ENCODE measurements at regions of chr12 and their contacts with region 1.

Region 1: GRCh38 chr12:6195665-6196535 is 4.3 kb upstream of the CD9 start:
- DNase-seq: peak; percentile 73
- H3K4me3 ChIP-seq: no peak overlapping the region
- H3K27ac ChIP-seq: no peak overlapping the region
- H3K4me1 ChIP-seq: peaks cover 14% of the 10 kb centered on the region
- CTCF ChIP-seq: peak; percentile 87

Region 2: GRCh38 chr12:6278439-6279255 is 82.7 kb after region 1 on chr12:
- CTCF ChIA-PET with region 1: interaction called, 6 read pairs
- POLR2A ChIA-PET with region 1: interaction called, 6 read pairs
- intact Hi-C with region 1: loop called (anchors 1 kb)
- DNase-seq: peak; percentile 75
- H3K4me3 ChIP-seq: peak overlapping the region; percentile 65
- H3K27ac ChIP-seq: no peak overlapping the region
- H3K4me1 ChIP-seq: peaks cover 7% of the 10 kb centered on the region
- CTCF ChIP-seq: peak; percentile 82

Region 3: GRCh38 chr12:6285063-6285477 is 89.2 kb after region 1 on chr12:
- CTCF ChIA-PET with region 1: interaction called, 6 read pairs
- POLR2A ChIA-PET with region 1: interaction called, 5 read pairs
- intact Hi-C with region 1: loop called (anchors 1 kb)
- DNase-seq: peak; percentile 74
- H3K4me3 ChIP-seq: no peak overlapping the region
- H3K27ac ChIP-seq: no peak overlapping the region
- H3K4me1 ChIP-seq: no peaks in the 10 kb centered on the region
- CTCF ChIP-seq: peak; percentile 98